Ascending aorta (tissue), 2 donors: ENCODE measurements at regions of chr15 and their contacts with region 1.

Region 1: GRCh38 chr15:65792130-65792987 is at the start of gene DENND4A:
- DNase-seq: peak; percentile 96 to 99
- H3K4me3 ChIP-seq: peak within 1 kb of the TSS; percentile 84 to 99
- H3K27ac ChIP-seq: peak within 1 kb of the TSS; percentile 98
- H3K4me1 ChIP-seq: peaks cover 5 to 14% of the 10 kb centered on the region in 2 donors
- H3K27me3 ChIP-seq: no peaks in the 10 kb centered on the region
- CTCF ChIP-seq: no peak
- total RNA-seq, gene DENND4A: 21.9 TPM

Region 2: DNA sequence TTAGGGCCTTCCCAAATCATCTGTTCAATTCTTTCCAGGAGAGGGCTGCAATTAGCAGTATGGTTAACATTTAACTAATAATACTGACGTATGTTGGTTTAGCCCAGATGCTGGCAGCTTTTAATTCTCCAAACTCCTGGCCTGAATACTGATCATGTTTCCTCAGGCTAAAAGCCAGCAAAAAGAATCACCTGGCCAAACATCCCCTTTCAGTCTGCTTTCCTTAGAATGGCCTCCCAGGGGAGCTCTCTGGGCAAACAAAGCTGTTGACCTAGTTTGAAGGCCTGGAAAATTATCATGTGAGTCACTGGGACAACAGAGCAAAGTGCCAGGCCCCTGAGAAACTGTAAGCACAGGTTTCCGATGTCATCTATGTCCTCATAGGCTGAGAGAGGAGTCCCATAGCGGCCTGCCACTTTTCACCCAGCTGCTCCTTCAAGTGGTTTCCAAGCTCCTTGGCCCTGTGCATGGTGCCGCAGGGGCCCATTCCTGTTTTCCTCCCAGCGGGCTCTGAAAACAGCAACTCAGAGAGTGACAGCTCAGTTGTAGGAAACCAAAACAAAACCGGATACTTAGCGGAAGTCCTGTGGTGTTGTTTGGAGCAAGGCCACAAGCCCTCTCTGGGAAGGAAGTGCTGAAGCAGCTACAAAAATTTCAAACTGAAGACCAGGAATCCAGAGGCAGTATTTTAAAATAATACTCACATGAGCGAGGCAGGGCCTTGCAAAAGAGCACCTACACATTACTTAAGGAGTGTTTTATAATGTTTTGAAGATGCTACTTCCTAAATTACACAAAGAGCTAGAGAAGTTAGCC is 40.4 kb after region 1 on chr15:
- intact Hi-C with region 1: loop called (anchors 1 kb)
- DNase-seq: peak; percentile 79 to 96
- H3K4me3 ChIP-seq: peak overlapping the region; percentile 12 to 43
- H3K27ac ChIP-seq: peak overlapping the region; percentile 66 to 71
- H3K4me1 ChIP-seq: peaks cover 10 to 25% of the 10 kb centered on the region in 2 donors
- H3K27me3 ChIP-seq: no peaks in the 10 kb centered on the region
- CTCF ChIP-seq: no peak

Region 3: DNA sequence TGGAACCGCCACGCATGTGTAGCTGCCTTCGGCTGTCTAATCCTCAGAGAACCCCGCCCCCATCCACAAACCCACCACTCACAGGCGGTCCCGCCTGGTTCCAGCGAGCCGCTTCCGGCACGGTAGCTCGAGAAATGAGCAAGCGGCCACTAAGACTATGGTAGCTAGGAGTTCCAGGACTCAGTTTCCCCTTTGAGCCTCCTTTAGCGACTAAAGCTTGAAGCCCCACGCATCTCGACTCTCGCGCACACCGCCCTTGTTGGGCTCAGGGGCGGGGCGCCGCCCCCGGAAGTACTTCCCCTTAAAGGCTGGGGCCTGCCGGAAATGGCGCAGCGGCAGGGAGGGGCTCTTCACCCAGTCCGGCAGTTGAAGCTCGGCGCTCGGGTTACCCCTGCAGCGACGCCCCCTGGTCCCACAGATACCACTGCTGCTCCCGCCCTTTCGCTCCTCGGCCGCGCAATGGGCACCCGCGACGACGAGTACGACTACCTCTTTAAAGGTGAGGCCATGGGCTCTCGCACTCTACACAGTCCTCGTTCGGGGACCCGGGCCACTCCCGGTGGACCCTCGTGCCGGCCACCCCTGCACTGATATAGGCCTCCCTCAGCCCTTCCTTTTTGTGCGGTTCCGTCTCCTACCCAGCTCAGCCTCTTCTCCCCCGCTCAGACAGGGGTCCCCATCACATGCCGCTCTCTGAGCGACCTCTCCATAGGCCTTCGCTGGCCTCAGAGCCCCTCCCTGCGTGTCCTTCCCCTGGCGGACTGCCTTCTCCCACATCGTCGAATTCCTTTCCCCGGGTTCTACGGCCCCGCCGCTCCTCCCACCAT is 77.0 kb after region 1 on chr15 and contains the start of gene RAB11A:
- intact Hi-C with region 1: loop called (anchors 1 kb)
- DNase-seq: peak; percentile 82 to 98
- H3K4me3 ChIP-seq: peak within 1 kb of the TSS; percentile 86 to 96
- H3K27ac ChIP-seq: peak within 1 kb of the TSS; percentile 95 to 97
- H3K4me1 ChIP-seq: peaks cover 3 to 5% of the 10 kb centered on the region in 2 donors
- H3K27me3 ChIP-seq: no peaks in the 10 kb centered on the region
- CTCF ChIP-seq: peak; percentile 15 to 46 (median 33)
- total RNA-seq, gene RAB11A: 192 TPM

Region 4: DNA sequence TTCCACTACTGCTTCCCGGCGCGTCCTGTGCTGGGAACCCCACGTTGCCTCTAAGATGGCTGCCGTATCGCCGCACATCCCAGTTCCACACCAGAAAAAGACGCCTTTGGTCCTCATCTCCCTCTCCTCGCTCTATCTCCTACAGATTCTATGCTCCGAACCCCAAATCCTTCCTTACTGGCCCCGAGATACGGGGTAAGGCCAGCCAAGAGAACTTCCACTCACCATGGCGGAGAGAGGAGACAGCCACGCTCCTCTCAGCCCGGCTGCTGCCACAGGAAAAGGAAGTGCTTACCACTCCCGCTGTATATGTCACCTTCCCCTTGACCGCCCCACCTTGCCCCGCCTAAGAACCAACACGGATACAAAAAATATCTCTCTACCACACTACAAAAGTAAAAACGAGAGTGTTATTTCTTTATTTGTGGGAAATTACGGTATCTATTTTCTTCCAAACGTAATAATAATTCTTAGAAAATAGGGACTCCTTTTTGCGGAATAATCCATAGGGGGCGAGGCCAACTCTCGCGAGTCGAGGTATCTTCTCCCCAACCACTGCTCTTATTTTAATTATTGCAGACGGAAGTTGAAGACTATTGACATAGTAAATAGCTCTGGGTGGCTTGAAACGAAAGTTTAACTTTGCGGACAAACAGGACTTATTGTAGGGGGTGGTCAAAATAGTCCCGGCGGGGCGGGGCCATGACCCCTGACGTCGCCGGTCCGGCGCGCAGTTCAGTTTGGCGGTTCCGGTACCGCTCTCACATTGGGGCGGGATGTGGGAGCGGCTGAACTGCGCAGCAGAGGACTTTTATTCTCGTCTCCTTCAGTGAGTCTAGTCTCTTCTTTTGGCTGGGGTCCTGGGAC is 712.4 kb after region 1 on chr15 and contains the starts of genes RPL4 and ZWILCH:
- intact Hi-C with region 1: loop called (anchors 5 kb)
- DNase-seq: peak; percentile 22 to 89
- H3K4me3 ChIP-seq: peak within 1 kb of the TSS; percentile 82 to 87
- H3K27ac ChIP-seq: peak within 1 kb of the TSS; percentile 93 to 96
- H3K4me1 ChIP-seq: peaks cover 9 to 21% of the 10 kb centered on the region in 2 donors
- H3K27me3 ChIP-seq: no peaks in the 10 kb centered on the region
- CTCF ChIP-seq: no peak
- total RNA-seq, gene RPL4: 2,799 TPM
- total RNA-seq, gene ZWILCH: 2.3 TPM